H1 (cell line): ENCODE measurements at regions of chr21 and their contacts with region 1.

Region 1: GRCh38 chr21:42652527-42653230 is 742 bp upstream of the PDE9A start:
- DNase-seq: peak in 1 of 2 experiments; percentile 75
- H3K4me3 ChIP-seq: peak overlapping the region; percentile 64 to 92 (median 76)
- H3K27ac ChIP-seq: 0 out of 2 replicates have a peak overlapping the region, but pooled peaks have one; percentile 31
- H3K4me1 ChIP-seq: peaks cover 13 to 41% (median 36%) of the 10 kb centered on the region in 4 experiments
- H3K27me3 ChIP-seq: no peaks in the 10 kb centered on the region; a peak in 2 of 7 replicates
- CTCF ChIP-seq: peak in 2 of 3 experiments; percentile 64 to 66; a peak in 3 of 4 replicates
- EP300 ChIP-seq: no peak
- POLR2A ChIP-seq: no peak
- RAD21 ChIP-seq: peak; percentile 42 to 62; a peak in 3 of 4 replicates

Region 2: GRCh38 chr21:42636538-42636930 is 16.1 kb before region 1 on chr21:
- CTCF ChIA-PET with region 1: interaction called, 112 read pairs
- POLR2A ChIA-PET with region 1: interaction called, 5 read pairs
- DNase-seq: no peak
- H3K4me3 ChIP-seq: no peak overlapping the region
- H3K27ac ChIP-seq: no peak overlapping the region
- H3K4me1 ChIP-seq: peaks cover 4 to 23% (median 8%) of the 10 kb centered on the region in 4 experiments; a peak in 6 of 7 replicates
- H3K27me3 ChIP-seq: peaks cover 0 to 7% (median 3%) of the 10 kb centered on the region in 4 experiments; a peak in 3 of 7 replicates
- CTCF ChIP-seq: no peak
- EP300 ChIP-seq: no peak
- POLR2A ChIP-seq: no peak
- RAD21 ChIP-seq: no peak

Region 3: GRCh38 chr21:42666023-42666747 is 13.5 kb after region 1 on chr21:
- CTCF ChIA-PET with region 1: interaction called, 21 read pairs
- POLR2A ChIA-PET with region 1: interaction called, 5 read pairs
- DNase-seq: peak in 1 of 2 experiments; percentile 86
- H3K4me3 ChIP-seq: no peak overlapping the region
- H3K27ac ChIP-seq: no peak overlapping the region
- H3K4me1 ChIP-seq: peaks cover 0 to 33% (median 14%) of the 10 kb centered on the region in 4 experiments; a peak in 5 of 7 replicates
- H3K27me3 ChIP-seq: no peaks in the 10 kb centered on the region; a peak in 1 of 7 replicates
- CTCF ChIP-seq: no peak
- EP300 ChIP-seq: no peak
- POLR2A ChIP-seq: no peak
- RAD21 ChIP-seq: no peak

Region 4: DNA sequence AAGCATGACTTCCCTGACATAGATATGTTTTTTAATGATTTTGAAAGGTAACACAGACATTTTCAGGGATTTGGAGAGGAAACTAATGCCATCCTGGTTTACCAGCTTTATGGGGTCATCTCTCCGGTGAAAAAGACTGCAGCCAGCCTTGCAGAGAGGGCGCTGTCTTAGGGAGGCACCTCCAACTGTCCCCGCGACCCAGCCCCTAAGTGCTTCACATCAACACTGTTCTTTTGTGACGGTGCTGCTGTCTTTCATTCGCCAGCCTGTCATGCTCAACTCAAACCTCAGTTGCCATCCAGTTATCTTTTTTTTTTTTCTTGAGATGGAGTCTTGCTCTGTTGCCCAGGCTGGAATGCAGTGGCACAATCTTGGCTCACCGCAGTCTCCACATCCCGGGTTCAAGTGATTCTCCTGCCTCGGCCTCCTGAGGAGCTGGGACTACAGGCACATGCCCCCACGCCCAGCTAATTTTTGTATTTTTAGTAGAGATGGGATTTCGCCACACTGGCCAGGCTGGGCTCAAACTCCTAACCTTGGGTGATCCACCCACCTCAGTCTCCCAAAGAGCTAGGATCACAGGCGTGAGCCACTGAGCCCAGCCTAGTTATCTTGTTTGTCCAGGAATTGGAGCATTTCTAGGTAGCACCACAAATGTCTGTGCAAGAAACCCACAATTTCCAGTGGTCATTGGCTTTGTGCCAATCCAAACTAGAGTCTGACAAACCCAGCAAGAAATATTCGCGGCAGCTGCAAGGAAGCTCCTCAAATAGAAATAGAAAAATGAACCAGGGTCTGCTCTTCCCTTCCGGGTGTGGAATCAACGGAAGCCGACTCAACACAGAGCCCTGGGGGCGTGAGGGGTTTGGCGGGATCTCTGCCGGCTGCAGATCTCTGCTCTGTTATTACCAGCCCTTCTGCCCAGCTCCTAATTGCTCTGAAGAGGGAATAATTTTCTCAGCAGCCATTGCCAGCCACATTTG is 25.0 kb after region 1 on chr21:
- CTCF ChIA-PET with region 1: interaction called, 29 read pairs
- POLR2A ChIA-PET with region 1: no interaction called
- DNase-seq: no peak
- H3K4me3 ChIP-seq: no peak overlapping the region
- H3K27ac ChIP-seq: no peak overlapping the region
- H3K4me1 ChIP-seq: peaks cover 2 to 27% (median 14%) of the 10 kb centered on the region in 4 experiments; a peak in 6 of 7 replicates
- H3K27me3 ChIP-seq: no peaks in the 10 kb centered on the region
- CTCF ChIP-seq: peak in 1 of 3 experiments; percentile 2; a peak in 1 of 4 replicates
- EP300 ChIP-seq: no peak
- POLR2A ChIP-seq: no peak
- RAD21 ChIP-seq: no peak

Region 5: GRCh38 chr21:42683371-42684108 is 30.9 kb after region 1 on chr21:
- CTCF ChIA-PET with region 1: interaction called, 29 read pairs
- POLR2A ChIA-PET with region 1: no interaction called
- DNase-seq: no peak
- H3K4me3 ChIP-seq: no peak overlapping the region
- H3K27ac ChIP-seq: no peak overlapping the region
- H3K4me1 ChIP-seq: peaks cover 0 to 6% (median 0%) of the 10 kb centered on the region in 4 experiments; a peak in 2 of 7 replicates
- H3K27me3 ChIP-seq: no peaks in the 10 kb centered on the region
- CTCF ChIP-seq: no peak
- EP300 ChIP-seq: no peak
- POLR2A ChIP-seq: no peak
- RAD21 ChIP-seq: no peak